Panc1 (cell line): ENCODE measurements at regions of chr5 and their contacts with region 1.

Region 1: DNA sequence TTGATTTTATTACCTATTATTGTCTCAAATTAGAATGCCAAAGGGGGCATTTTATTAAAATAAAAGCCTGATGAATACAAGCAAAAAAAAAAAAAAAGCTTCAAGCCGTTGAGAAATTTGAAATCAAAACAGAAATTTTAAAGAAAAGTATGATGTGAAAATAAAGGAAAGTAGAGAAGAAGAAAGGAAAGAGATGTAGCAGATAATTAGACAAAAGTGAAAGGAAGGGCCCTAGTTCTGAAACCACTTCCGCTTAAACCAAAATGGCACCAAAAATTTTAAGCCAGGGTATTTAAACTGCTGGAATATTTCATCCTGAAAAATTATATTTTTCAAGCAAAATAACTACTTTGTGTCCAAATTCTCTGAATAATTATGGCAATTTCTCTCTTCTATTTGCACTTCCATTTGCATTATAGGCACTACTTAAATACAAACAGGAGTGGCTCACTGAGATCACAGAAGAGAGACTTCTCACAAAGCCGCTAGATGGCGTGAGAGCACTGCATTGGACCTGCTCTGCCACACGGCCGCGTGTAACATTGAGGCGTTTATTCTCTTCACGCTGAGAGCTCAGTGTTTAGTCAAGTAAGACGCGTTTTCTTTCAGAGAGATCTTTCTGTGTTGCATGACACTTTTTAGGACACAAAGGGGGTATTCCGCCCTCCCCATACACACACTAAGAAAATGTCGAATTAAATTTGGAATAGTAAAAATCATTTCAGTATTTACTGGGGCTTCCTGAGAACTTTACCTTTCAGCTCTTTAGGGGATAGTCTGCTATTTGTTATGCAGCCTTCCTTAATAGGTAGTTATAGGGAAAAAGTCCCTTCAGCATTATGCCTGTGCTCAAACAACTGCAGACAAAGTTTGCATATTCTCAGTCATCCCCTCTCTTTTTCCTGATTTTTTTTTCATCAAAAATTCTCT is 368.4 kb upstream of the CCNH start:
- DNase-seq: peak; percentile 64
- ATAC-seq: peak; percentile 100
- H3K4me3 ChIP-seq: no peak overlapping the region
- H3K27ac ChIP-seq: no peak overlapping the region
- H3K4me1 ChIP-seq: no peaks in the 10 kb centered on the region
- H3K27me3 ChIP-seq: peaks cover 3% of the 10 kb centered on the region; the same call in 1 of the 2 replicates
- CTCF ChIP-seq: peak; percentile 93

Region 2: DNA sequence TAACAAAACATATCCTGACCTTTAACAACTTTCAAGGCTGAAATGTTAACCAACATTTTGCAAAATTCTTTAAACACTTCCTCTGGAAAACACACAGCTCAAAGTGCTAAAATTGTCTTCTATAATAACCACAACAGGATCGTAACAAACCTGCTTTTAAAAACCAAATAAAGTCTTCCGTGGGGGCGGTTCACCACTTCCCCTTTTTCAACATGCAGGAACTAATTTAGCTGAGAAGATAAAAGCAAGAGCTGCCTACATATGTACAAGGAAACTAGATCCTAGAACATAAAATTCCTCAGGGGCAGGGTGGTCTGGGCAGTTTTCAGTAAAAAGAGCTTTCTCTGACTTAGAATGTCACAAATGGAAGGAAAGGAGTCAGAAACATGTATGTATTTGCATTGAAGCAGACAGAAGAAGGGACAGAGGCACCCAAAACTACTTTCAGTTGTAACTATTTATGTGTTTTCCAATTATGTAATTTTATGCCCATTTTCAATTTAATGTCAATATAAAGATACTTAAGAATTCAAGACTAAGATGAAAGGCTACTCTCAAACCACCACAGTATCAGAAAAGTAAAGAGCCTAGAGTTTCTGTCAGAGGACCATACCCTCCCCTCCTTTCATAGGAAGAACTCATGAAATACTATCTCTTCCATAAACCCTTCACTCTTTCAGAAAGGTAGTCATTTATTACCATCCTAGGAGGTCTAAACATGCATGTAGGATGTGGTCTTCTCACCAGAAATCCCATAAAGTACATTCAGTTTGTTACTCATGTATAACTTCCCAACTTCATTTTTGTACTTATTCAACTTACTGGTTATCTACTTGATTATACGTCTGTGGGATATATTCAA is 699.4 kb before region 1 on chr5:
- CTCF ChIA-PET with region 1: no interaction called
- POLR2A ChIA-PET with region 1: no interaction called
- in situ Hi-C with region 1: no loop called
- intact Hi-C with region 1: no loop called
- DNase-seq: no peak
- ATAC-seq: no peak
- H3K4me3 ChIP-seq: no peak overlapping the region
- H3K27ac ChIP-seq: no peak overlapping the region
- H3K4me1 ChIP-seq: no peaks in the 10 kb centered on the region
- H3K27me3 ChIP-seq: no peaks in the 10 kb centered on the region
- CTCF ChIP-seq: no peak

Region 3: DNA sequence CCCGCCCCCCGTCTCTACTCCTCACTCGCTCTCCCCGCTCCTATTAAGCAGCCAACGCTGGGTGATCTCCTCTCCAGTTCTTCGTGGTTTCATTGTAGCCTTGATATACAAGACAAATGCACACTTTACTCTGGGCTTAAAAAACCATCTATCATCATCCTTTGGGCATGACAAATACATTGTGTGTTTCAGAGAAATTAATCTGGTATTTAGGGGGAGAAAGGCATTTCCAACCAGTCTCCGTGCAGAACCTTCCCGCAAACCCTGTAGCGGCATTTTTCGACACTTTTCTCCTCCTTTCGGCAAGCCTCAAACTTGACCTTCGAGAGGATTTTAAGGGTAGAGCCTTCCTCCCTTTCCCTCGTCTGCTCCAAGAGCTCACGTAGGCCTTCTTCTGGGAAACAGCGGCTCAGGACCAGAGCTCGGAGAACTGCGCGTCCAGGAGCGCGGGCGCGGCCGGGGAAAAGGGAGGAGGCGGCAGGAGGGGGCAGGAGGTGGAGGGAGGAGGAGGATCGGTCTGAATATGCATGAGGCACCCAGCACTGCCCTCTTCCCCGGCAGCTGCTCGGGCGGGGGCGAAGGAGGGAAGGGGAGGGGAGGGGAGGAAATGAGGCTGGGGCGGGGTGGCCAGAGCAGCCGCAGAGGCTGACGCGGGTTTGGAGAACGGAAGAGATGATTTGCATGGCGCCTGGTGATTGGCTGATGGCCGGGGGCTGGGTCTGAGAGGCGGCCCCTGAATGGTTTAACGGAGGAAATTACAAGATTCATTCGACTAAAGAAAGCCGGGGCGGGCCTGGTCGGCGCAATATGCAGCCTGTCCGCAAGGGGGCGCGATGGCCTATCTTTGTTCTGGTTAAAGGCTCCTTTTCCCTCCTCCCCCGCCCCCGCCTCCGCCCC is 360.0 kb after region 1 on chr5:
- CTCF ChIA-PET with region 1: interaction called, 13 read pairs
- POLR2A ChIA-PET with region 1: no interaction called
- in situ Hi-C with region 1: no loop called
- intact Hi-C with region 1: loop called (anchors 10 kb)
- DNase-seq: peak; percentile 82
- ATAC-seq: peak; percentile 95
- H3K4me3 ChIP-seq: peak overlapping the region; percentile 67 to 89
- H3K27ac ChIP-seq: peak overlapping the region; percentile 53
- H3K4me1 ChIP-seq: peaks cover 19% of the 10 kb centered on the region
- H3K27me3 ChIP-seq: peaks cover 19% of the 10 kb centered on the region
- CTCF ChIP-seq: peak; percentile 86

Region 4: GRCh38 chr5:88680253-88681132 is 899.4 kb after region 1 on chr5:
- CTCF ChIA-PET with region 1: no interaction called
- POLR2A ChIA-PET with region 1: no interaction called
- in situ Hi-C with region 1: no loop called
- intact Hi-C with region 1: loop called (anchors 2 kb)
- DNase-seq: no peak
- ATAC-seq: peak; percentile 93
- H3K4me3 ChIP-seq: peak overlapping the region; percentile 50 to 62
- H3K27ac ChIP-seq: peak overlapping the region; percentile 69
- H3K4me1 ChIP-seq: peaks cover 19% of the 10 kb centered on the region
- H3K27me3 ChIP-seq: no peaks in the 10 kb centered on the region
- CTCF ChIP-seq: peak; percentile 97

Region 5: DNA sequence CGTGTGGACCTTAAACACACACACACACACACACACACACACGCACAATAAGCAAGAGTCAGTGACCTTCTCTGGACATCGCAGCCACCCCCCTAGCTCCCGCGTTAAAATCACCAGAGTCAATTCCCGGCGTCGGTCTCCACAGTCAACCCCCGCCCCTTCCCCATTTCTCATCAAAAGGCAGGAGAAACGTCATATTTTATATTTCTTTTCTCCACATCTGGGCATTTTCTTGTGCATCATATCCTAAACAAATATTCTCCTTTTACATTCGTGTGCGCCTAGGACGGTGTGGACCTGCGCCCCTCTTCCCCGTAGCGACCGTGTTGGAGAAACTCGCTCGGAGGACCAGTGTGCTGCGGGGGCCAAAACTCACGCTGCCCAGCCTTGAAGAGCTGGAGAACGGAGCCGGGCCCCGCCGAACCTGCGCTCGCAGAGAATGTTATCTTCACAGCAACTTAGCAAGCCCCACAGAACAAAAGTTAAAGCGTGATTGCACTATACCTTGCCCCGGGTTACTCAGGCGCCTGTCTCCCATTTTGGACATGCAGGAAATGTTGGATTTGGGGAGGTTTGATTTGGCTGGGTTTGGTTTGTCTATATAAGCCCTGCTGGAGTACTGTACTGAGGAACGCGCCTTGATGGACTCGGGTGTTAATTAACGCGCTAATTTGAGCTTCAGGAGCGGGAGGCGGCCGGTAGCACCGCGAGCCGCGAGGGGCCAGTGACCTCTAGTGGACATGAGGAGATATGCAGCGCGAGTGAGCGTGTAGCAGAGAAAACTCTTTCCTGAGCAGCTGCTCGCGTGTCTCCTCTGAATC is 909.5 kb after region 1 on chr5:
- CTCF ChIA-PET with region 1: interaction called, 4 read pairs
- POLR2A ChIA-PET with region 1: no interaction called
- in situ Hi-C with region 1: no loop called
- intact Hi-C with region 1: loop called (anchors 1 kb)
- DNase-seq: no peak
- ATAC-seq: peak; percentile 92
- H3K4me3 ChIP-seq: peak overlapping the region; percentile 30 to 56
- H3K27ac ChIP-seq: no peak overlapping the region
- H3K4me1 ChIP-seq: peaks cover 10% of the 10 kb centered on the region; the same call in 1 of the 2 replicates
- H3K27me3 ChIP-seq: peaks cover 3% of the 10 kb centered on the region
- CTCF ChIP-seq: peak; percentile 99

Region 6: GRCh38 chr5:88724201-88724600 is 943.1 kb after region 1 on chr5:
- CTCF ChIA-PET with region 1: interaction called, 13 read pairs
- POLR2A ChIA-PET with region 1: no interaction called
- in situ Hi-C with region 1: no loop called
- intact Hi-C with region 1: no loop called
- DNase-seq: no peak
- ATAC-seq: no peak
- H3K4me3 ChIP-seq: no peak overlapping the region
- H3K27ac ChIP-seq: no peak overlapping the region
- H3K4me1 ChIP-seq: no peaks in the 10 kb centered on the region
- H3K27me3 ChIP-seq: no peaks in the 10 kb centered on the region
- CTCF ChIP-seq: peak; percentile 41; the same call in 1 of the 2 replicates